Right ventricle myocardium inferior (tissue), 1 donor: ENCODE measurements at regions of chr5 and their contacts with region 1.

Region 1: DNA sequence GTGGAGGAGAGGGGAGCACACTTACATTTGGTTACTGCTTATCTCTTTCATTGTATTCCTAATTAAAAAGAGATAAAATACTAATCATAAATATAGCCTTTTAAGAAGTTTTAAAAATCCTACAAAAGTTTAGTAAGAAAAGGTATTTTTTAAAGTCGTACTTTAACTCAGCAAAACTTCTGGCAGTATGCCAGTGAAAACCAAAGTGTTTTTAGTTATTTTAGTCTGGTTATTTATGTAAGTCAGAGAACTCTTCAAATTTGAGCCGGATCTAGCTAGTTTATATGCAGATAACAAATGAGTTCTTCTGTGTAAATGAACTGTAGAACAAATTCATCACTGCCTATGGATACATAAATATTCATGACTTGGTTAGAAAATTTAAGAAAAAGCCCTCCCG is 36.5 kb upstream of the ANKDD1B start:
- DNase-seq: no peak
- ATAC-seq: no peak

Region 2: DNA sequence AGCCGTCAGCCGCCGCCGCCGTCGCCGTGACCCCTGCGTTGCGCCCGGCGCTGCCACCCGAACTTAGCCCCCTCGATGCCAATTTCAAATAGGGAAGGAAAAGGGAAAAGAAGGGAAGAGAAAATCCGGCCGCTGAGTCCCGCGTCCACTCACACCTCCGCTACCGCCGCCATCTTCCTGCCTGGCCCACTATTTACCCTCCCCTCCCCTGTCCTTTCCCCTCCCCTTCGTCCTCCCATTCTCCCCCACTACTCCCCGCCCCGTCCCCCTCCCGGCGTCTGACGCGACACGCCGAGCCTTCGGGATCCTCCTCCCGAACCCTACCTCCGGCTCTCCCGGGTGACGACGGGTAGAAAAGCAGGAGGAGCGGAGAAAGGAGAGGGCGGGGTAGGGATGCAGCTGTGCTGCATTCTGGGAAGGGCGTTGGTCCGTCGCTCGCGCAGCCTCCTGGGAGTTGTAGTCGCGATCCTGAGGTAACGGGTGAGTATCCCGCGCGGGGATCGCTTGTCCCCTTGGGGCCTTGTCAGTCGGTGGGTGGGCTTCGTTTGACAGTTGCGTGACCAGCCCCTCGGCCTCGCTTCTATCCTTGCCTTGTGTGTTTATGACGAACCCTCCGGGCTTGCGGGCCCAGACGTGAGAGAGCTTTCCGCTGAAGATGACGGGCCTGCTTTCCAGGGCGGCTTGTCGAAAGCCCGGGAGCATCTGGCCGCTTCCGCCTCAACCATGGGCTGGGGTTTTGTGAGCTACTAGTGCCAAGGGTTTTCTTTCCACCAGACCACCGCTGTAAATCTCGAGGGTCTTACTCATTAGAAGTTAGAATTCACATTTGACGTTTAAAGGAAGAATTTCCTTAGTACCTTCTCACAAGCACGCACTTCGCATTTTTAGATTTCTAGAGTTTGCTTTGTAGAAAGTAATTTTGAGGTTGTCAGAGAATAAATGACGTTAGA is 63.1 kb before region 1 on chr5 and contains the starts of genes CERT1 and POLK:
- intact Hi-C with region 1: loop called (anchors 5 kb)
- DNase-seq: peak; percentile 99
- ATAC-seq: peak; percentile 99
- total RNA-seq, gene CERT1: 26.0 TPM
- total RNA-seq, gene POLK: 20.1 TPM